Right ventricle myocardium inferior (tissue), 1 donor: ENCODE measurements at regions of chr2 and their contacts with region 1.

Region 1: DNA sequence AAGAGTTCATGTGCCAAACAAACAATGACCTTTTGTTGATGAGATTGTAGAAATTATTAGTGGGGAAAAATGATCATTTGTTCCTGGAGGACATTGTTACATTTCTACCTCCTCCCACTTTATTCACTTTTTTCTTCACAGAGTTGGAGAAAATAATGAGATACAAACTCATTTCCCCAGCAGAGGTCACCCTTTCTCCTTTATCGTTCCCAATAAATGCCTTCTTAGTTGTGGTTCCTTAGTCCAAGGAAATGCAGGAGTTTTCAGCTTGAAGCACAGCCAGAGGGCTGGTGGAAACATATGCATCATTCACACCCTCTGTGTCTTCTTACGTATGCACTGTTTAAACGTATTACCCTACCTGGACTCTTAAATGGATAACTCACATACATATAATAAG is 108.8 kb downstream of the SLC4A3 start:
- DNase-seq: no peak
- ATAC-seq: peak; percentile 53

Region 2: DNA sequence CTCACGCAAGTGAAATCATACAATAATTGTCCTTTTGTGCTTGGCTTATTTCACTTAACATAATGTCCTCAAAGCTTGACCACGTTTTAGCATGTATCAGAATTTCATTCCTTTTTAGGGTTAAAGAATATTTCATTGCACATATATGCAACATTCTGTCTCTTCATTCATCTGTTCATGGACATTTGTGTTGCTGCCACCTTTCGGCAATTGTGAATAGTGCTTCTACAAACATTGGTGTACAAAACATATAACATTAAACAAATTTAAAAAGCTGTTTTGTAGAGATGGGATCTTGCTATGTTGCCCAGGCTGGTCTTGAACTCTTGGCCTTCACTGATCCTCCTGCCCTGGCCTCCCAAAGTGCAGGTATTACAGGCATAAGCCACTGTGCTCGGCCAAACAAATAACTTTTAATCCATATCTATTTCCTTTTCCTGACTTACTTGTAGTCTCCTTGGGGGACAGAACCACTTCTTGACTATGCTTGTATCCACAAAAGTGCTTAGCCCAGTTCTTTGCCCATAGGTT is 100.5 kb after region 1 on chr2:
- intact Hi-C with region 1: loop called (anchors 1 kb)
- DNase-seq: no peak
- ATAC-seq: no peak

Region 3: GRCh38 chr2:219997341-219997851 is 261.2 kb after region 1 on chr2:
- intact Hi-C with region 1: loop called (anchors 5 kb)
- DNase-seq: no peak
- ATAC-seq: peak; percentile 37